ENCODE measurements at regions of chr9 and their contacts with region 1.

Region 1: GRCh38 chr9:137406876-137407589 is 15.9 kb downstream of the EXD3 start:
- DNase-seq: peak; percentile 89
- H3K4me3 ChIP-seq: peak overlapping the region in 7 of 8 donors; percentile 11 to 57 (median 26)
- H3K27ac ChIP-seq: peak overlapping the region in 5 of 8 donors; percentile 41 to 67 (median 52)
- H3K4me1 ChIP-seq: peaks cover 17 to 52% (median 37%) of the 10 kb centered on the region in 6 donors
- H3K27me3 ChIP-seq: peaks cover 0 to 37% (median 8%) of the 10 kb centered on the region in 7 donors
- CTCF ChIP-seq: peak; percentile 47 to 85 (median 79)
- POLR2A ChIP-seq: no peak

Region 2: DNA sequence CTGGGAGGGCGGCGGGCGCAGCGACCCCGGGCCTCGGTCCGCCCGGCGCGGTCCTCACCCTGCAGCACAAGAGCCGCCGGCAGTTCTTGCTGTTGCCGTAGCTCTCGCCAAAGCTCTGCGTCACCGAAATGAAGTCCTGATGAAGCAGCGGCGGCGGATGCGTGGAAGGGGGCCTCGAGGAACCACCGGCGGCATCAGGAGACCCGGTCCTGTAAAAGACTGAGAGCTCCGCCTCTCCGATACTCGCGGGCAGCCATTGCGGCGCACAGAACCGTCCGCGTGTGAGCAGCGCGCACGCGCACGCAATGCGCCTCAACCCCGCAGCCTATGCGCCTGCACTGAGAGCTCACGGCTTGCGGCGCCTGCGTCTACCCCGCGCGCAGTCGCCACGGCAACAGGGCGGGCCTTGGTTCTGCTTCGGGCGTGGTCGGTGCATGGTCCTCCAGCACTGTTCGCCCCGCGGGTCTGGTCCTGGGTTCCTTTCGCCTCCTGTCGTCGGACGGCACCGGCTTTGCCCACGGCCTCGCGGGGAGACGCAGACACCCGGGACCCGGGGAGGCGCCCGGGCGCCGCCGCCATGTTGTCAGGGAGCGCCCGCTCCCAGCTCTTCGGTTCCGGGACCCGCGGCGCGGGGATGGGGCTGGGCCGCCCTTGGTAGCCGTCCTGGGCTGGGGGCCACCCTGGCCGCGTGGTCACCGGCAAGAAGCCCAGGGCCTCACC is 277.4 kb before region 1 on chr9:
- intact Hi-C with region 1: no loop called
- DNase-seq: peak; percentile 97
- H3K4me3 ChIP-seq: peak overlapping the region; percentile 73 to 89 (median 83)
- H3K27ac ChIP-seq: peak overlapping the region; percentile 53 to 85 (median 78)
- H3K4me1 ChIP-seq: peaks cover 28 to 51% (median 41%) of the 10 kb centered on the region in 6 donors
- H3K27me3 ChIP-seq: peaks cover 0 to 46% (median 10%) of the 10 kb centered on the region in 7 donors
- CTCF ChIP-seq: peak in 3 of 11 experiments; percentile 16 to 29 (median 16)
- POLR2A ChIP-seq: no peak

Region 3: DNA sequence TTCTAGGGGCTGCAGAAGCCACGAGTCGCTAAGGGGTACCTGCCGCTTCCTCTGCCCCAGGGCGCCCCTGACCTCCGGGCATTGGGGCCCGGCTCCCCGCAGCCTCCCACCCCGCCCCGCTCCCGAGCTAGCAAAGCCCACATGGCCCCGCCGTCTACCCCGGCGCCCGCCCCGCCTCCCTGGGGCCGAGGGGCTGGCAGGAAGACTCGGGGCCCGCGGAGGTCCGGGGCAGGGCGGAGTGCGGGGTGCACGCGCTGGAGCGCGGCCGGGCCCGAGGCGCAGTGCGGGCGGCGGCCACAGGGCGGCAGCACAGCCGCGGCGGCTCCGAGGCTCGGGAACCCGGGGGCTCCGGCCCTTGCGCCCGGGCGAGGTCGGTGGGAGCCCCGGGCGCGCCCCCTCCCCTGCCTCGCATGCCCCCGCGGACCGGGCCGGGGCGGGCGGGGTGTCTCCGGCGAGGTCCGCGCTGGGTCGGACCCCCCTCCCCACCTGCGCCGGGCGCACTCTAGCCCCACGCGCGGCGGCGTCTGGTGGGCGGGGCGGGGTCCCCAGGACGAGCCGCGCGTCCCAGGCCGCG is 111.7 kb before region 1 on chr9:
- intact Hi-C with region 1: loop called (anchors 5 kb)
- DNase-seq: peak; percentile 89
- H3K4me3 ChIP-seq: peak overlapping the region in 7 of 8 donors; percentile 24 to 75 (median 41)
- H3K27ac ChIP-seq: peak overlapping the region in 4 of 8 donors; percentile 63 to 82 (median 73)
- H3K4me1 ChIP-seq: peaks cover 16 to 63% (median 45%) of the 10 kb centered on the region in 6 donors
- H3K27me3 ChIP-seq: peaks cover 2 to 78% (median 44%) of the 10 kb centered on the region in 7 donors
- CTCF ChIP-seq: peak in 7 of 11 experiments; percentile 27 to 88 (median 77)
- POLR2A ChIP-seq: no peak

Region 4: GRCh38 chr9:137320555-137321384 is 86.3 kb before region 1 on chr9:
- intact Hi-C with region 1: no loop called
- DNase-seq: peak; percentile 90
- H3K4me3 ChIP-seq: peak overlapping the region in 5 of 8 donors; percentile 1 to 51 (median 16)
- H3K27ac ChIP-seq: peak overlapping the region in 7 of 8 donors; percentile 11 to 84 (median 74)
- H3K4me1 ChIP-seq: peaks cover 24 to 62% (median 46%) of the 10 kb centered on the region in 6 donors
- H3K27me3 ChIP-seq: peaks cover 0 to 27% (median 11%) of the 10 kb centered on the region in 7 donors
- CTCF ChIP-seq: no peak
- POLR2A ChIP-seq: no peak

Measured in spleen (tissue), 13 donors.